OCI-LY7 (cell line): ENCODE measurements at regions of chr10 and their contacts with region 1.

Region 1: DNA sequence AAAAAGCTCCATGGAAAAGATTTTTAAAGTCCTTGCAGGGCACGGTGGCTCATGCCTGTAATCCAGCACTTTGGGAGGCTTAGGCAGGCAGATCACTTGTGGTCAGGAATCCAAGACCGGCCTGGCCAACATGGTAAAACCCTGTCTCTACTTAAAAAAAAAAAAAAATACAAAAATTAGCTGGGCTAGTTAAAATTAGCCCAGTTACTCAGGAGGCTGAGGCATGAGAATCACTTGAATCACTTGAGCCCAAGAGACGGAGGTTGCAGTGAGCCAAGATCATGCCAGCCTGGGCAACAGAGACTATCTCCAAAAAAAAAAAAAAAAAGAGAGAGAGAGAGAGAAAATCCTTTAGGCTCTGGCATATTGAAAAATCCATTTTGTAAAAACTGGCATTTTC is 61.9 kb downstream of the CCDC6 start:
- DNase-seq: no peak
- H3K4me3 ChIP-seq: no peak overlapping the region
- H3K27ac ChIP-seq: no peak overlapping the region
- H3K4me1 ChIP-seq: no peaks in the 10 kb centered on the region
- CTCF ChIP-seq: no peak

Region 2: DNA sequence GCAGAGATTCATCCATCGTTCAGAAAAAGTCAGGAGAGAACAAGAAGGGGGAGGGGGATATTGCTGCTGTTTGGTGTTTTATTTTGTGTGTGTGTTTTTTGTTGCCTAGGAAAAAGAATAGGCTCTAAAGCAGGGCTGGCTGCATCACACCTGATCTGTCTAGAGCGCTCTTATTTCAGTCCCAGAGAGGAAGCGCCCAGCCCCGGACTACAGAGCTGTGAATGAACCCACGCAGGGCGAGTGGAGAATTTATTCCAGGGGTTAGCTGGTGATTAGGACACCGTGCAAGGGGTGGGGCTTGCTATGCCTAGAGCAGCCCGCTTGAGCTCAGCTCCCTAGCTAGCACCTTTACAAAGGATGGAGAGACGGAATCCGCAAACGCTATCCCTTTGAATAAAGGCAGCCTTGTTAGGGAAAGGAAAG is 481.5 kb before region 1 on chr10:
- CTCF ChIA-PET with region 1: no interaction called
- POLR2A ChIA-PET with region 1: interaction called, 11 read pairs
- intact Hi-C with region 1: no loop called
- DNase-seq: no peak
- H3K4me3 ChIP-seq: no peak overlapping the region
- H3K27ac ChIP-seq: no peak overlapping the region
- H3K4me1 ChIP-seq: no peaks in the 10 kb centered on the region
- CTCF ChIP-seq: no peak

Region 3: GRCh38 chr10:59830601-59831259 is 13.7 kb before region 1 on chr10:
- CTCF ChIA-PET with region 1: no interaction called
- POLR2A ChIA-PET with region 1: interaction called, 18 read pairs
- intact Hi-C with region 1: no loop called
- DNase-seq: peak; percentile 53
- H3K4me3 ChIP-seq: no peak overlapping the region
- H3K27ac ChIP-seq: no peak overlapping the region
- H3K4me1 ChIP-seq: peaks cover 39% of the 10 kb centered on the region
- CTCF ChIP-seq: peak; percentile 89

Region 4: GRCh38 chr10:60096761-60097513 is 252.5 kb after region 1 on chr10:
- CTCF ChIA-PET with region 1: no interaction called
- POLR2A ChIA-PET with region 1: no interaction called
- intact Hi-C with region 1: no loop called
- DNase-seq: no peak
- H3K4me3 ChIP-seq: no peak overlapping the region
- H3K27ac ChIP-seq: no peak overlapping the region
- H3K4me1 ChIP-seq: no peaks in the 10 kb centered on the region
- CTCF ChIP-seq: no peak